Activated CD4-positive, alpha-beta T cell treated with anti-CD3 and anti-CD28 coated beads, Interleukin-2, amount 10 ng/mL, durations not matched to agents 7 days and 5 days (primary cell): ENCODE measurements at regions of chr6 and their contacts with region 1.

Region 1: DNA sequence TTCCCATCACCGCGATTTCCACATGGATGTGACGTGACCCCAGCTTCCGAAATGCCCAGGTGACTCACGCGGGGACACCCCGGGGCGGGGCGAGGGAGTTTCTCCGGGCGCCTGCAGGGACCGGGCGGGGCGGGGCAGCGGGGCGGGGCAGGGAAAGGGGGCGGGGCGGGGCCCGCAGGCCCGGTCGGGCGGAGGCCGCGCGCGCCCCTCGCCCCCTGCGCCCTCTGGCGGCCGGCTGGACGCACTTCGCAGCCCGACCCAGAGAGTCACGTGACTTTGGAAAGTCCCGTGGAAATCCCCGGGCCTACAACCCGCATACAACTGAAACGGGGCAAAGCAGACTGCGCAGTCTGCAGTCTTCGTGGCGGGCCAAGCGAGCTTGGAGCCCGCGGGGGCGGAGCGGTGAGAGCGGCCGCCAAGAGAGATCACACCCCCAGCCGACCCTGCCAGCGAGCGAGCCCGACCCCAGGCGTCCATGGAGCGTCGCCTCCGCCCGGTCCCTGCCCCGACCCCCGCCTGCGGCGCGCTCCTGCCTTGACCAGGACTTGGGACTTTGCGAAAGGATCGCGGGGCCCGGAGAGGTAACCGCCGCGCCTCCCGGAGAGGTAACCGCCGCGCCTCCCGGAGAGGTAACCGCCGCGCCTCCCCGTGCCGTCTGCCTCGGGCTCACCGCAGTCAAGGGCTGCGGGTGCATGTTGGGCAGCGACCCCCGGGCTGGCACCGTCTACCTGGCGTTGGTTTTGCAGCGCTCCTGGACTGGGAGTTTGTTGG is at the start of gene TNFAIP3:
- DNase-seq: peak; percentile 95
- H3K4me3 Mint-ChIP-seq: peak within 1 kb of the TSS; percentile 91
- H3K27ac Mint-ChIP-seq: peak within 1 kb of the TSS; percentile 98
- H3K4me1 Mint-ChIP-seq: peaks cover 57% of the 10 kb centered on the region
- H3K27me3 Mint-ChIP-seq: no peaks in the 10 kb centered on the region
- total RNA-seq, gene TNFAIP3: 41.8 to 43.9 TPM

Region 2: GRCh38 chr6:137652966-137653705 is 214.0 kb before region 1 on chr6:
- CTCF ChIA-PET with region 1: no interaction called
- POLR2A ChIA-PET with region 1: no interaction called
- DNase-seq: no peak
- H3K4me3 Mint-ChIP-seq: no peak overlapping the region
- H3K27ac Mint-ChIP-seq: no peak overlapping the region
- H3K4me1 Mint-ChIP-seq: peaks cover 20% of the 10 kb centered on the region
- H3K27me3 Mint-ChIP-seq: peaks cover 4% of the 10 kb centered on the region

Region 3: GRCh38 chr6:137707590-137708360 is 159.3 kb before region 1 on chr6:
- CTCF ChIA-PET with region 1: interaction called, 68 read pairs
- POLR2A ChIA-PET with region 1: interaction called, 4 read pairs
- DNase-seq: peak; percentile 93
- H3K4me3 Mint-ChIP-seq: peak overlapping the region; percentile 64
- H3K27ac Mint-ChIP-seq: peak overlapping the region; percentile 96
- H3K4me1 Mint-ChIP-seq: peaks cover 69% of the 10 kb centered on the region
- H3K27me3 Mint-ChIP-seq: no peaks in the 10 kb centered on the region

Region 4: DNA sequence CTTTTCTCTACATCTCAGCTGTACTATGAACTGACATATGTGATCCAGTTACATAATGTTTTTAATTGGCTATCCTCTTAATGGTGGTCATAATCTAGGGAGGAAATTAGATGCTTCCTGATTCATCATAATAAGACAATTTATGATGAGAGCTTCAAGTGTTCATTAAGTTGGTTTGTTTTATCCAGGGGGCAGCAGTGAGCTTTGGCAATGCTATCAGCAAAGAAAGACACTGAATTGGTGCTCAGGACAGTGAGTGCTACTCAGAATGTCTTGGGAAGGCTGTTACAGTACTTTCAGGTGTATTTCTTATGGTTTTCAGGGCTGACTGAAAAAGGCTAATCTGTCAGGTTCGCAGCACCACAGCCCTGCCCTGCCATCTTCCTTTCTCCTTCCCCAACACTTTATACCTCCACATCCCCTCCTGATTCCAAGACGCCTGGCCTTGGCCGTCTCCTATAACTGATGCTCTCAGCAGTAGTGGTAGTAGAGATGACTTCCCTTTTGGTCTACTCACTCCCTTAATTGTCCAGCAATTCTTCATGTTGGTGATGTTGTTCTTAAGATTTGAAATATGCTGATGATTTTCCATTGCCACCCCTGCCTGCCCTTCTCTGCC is 67.0 kb before region 1 on chr6:
- CTCF ChIA-PET with region 1: interaction called, 48 read pairs
- POLR2A ChIA-PET with region 1: interaction called, 7 read pairs
- DNase-seq: peak; percentile 75
- H3K4me3 Mint-ChIP-seq: no peak overlapping the region
- H3K27ac Mint-ChIP-seq: peak overlapping the region; percentile 46
- H3K4me1 Mint-ChIP-seq: peaks cover 65% of the 10 kb centered on the region
- H3K27me3 Mint-ChIP-seq: no peaks in the 10 kb centered on the region

Region 5: DNA sequence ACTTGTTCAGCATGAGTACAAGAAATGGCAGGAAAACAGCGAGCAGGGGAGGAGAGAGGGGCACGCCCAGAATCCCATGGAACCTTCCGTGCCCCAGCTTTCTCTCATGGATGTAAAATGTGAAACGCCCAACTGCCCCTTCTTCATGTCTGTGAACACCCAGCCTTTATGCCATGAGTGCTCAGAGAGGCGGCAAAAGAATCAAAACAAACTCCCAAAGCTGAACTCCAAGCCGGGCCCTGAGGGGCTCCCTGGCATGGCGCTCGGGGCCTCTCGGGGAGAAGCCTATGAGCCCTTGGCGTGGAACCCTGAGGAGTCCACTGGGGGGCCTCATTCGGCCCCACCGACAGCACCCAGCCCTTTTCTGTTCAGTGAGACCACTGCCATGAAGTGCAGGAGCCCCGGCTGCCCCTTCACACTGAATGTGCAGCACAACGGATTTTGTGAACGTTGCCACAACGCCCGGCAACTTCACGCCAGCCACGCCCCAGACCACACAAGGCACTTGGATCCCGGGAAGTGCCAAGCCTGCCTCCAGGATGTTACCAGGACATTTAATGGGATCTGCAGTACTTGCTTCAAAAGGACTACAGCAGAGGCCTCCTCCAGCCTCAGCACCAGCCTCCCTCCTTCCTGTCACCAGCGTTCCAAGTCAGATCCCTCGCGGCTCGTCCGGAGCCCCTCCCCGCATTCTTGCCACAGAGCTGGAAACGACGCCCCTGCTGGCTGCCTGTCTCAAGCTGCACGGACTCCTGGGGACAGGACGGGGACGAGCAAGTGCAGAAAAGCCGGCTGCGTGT is 11.6 kb after region 1 on chr6:
- CTCF ChIA-PET with region 1: interaction called, 19 read pairs
- POLR2A ChIA-PET with region 1: interaction called, 5 read pairs
- DNase-seq: no peak
- H3K4me3 Mint-ChIP-seq: no peak overlapping the region
- H3K27ac Mint-ChIP-seq: peak overlapping the region; percentile 25
- H3K4me1 Mint-ChIP-seq: peaks cover 81% of the 10 kb centered on the region
- H3K27me3 Mint-ChIP-seq: no peaks in the 10 kb centered on the region

Region 6: GRCh38 chr6:137944793-137945498 is 77.8 kb after region 1 on chr6:
- CTCF ChIA-PET with region 1: interaction called, 30 read pairs
- POLR2A ChIA-PET with region 1: no interaction called
- DNase-seq: peak; percentile 54
- H3K4me3 Mint-ChIP-seq: no peak overlapping the region
- H3K27ac Mint-ChIP-seq: no peak overlapping the region
- H3K4me1 Mint-ChIP-seq: peaks cover 30% of the 10 kb centered on the region
- H3K27me3 Mint-ChIP-seq: no peaks in the 10 kb centered on the region

Region 7: GRCh38 chr6:138017166-138017757 is 150.2 kb after region 1 on chr6:
- CTCF ChIA-PET with region 1: no interaction called
- POLR2A ChIA-PET with region 1: no interaction called
- DNase-seq: no peak
- H3K4me3 Mint-ChIP-seq: no peak overlapping the region
- H3K27ac Mint-ChIP-seq: no peak overlapping the region
- H3K4me1 Mint-ChIP-seq: no peaks in the 10 kb centered on the region
- H3K27me3 Mint-ChIP-seq: peaks cover 18% of the 10 kb centered on the region

Region 8: DNA sequence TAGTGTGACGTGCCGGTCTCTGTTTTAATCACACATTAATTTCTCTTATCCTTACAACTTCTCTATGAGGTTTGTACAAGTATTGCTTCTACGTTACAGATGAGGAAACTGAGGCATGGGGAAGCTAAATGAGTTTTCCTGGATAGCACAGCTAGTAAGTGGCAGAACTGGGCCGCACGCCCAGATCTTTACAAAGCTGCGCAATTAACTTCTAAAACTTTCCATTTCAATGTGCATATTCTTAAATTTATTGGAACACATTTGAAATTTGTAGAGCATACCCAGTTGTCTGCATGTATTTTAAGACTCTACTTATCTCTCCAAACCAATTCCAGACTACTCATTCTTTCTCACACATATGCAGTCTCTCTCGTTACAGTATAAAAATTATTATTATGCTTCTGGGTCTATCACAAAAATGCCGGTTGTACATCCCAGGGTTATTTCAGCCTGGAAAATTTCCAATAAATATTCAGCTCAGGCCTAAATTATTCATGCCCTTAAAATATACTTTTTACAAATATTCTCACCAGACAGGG is 250.3 kb after region 1 on chr6:
- CTCF ChIA-PET with region 1: no interaction called
- POLR2A ChIA-PET with region 1: no interaction called
- DNase-seq: no peak
- H3K4me3 Mint-ChIP-seq: no peak overlapping the region
- H3K27ac Mint-ChIP-seq: no peak overlapping the region
- H3K4me1 Mint-ChIP-seq: peaks cover 8% of the 10 kb centered on the region
- H3K27me3 Mint-ChIP-seq: peaks cover 42% of the 10 kb centered on the region